CD8-positive, alpha-beta T cell (primary cell): ENCODE measurements at regions of chr13 and their contacts with region 1.

Region 1: DNA sequence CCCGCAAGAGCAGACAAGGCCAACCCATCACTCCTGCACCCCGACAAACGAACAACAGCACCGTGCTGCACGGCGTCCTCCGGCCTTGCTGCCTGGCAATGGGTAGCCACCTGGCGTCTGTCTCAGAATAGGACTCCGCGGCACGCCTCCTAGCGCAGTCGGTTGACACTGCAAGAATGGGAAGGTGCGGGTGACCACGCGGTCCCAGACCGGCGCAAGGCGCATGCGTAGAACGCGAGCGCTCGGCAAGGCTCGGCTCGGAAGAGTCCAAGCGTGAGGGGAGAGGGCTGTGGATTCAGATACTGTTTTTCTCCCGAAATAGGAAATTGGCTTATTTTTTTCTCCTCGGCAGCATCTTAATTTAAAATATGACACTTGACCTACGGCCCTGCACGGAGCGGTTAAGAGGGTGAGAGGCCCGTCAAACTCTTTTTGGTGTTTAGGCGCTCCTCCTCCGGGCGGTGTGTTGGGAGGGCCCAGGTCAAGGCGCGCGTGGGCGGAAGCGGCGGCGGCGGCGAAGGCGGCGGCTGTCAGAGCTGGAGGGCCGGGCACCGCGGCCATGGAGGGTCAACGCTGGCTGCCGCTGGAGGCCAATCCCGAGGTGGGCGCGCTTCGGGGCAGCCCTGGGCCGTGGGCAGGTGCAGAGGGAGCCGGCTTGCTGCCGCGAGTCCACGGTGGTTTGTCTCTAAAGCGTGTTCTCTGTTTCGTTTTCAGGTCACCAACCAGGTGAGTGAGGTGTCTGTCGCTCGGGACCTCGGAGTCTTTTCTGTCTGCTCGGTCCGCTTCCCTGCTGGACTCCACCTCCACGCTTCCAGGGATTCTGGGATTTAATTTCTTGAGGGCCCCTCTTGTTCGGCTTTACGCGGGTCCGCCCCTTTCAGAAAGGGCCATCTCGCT is at the start of gene UCHL3:
- DNase-seq: peak; percentile 95 to 99 (median 97)
- ATAC-seq: peak; percentile 92
- H3K4me3 ChIP-seq: peak within 1 kb of the TSS; percentile 74 to 82
- H3K4me3 Mint-ChIP-seq: peak within 1 kb of the TSS; percentile 95
- H3K27ac ChIP-seq: peak within 1 kb of the TSS; percentile 84 to 87
- H3K27ac Mint-ChIP-seq: peak within 1 kb of the TSS; percentile 97
- H3K4me1 ChIP-seq: peaks cover 19% of the 10 kb centered on the region
- H3K4me1 Mint-ChIP-seq: peaks cover 44% of the 10 kb centered on the region
- H3K27me3 ChIP-seq: no peaks in the 10 kb centered on the region
- H3K27me3 Mint-ChIP-seq: no peaks in the 10 kb centered on the region
- CTCF ChIP-seq: peak; percentile 91
- total RNA-seq, gene UCHL3: 17.7 to 17.9 TPM

Region 2: GRCh38 chr13:75236774-75237173 is 312.7 kb before region 1 on chr13:
- CTCF ChIA-PET with region 1: no interaction called
- POLR2A ChIA-PET with region 1: no interaction called
- intact Hi-C with region 1: no loop called
- DNase-seq: no peak
- ATAC-seq: no peak
- H3K4me3 ChIP-seq: no peak overlapping the region
- H3K4me3 Mint-ChIP-seq: no peak overlapping the region
- H3K27ac ChIP-seq: no peak overlapping the region
- H3K27ac Mint-ChIP-seq: no peak overlapping the region
- H3K4me1 ChIP-seq: no peaks in the 10 kb centered on the region
- H3K4me1 Mint-ChIP-seq: no peaks in the 10 kb centered on the region
- H3K27me3 ChIP-seq: no peaks in the 10 kb centered on the region
- H3K27me3 Mint-ChIP-seq: no peaks in the 10 kb centered on the region
- CTCF ChIP-seq: no peak

Region 3: GRCh38 chr13:75357576-75358289 is 191.8 kb before region 1 on chr13:
- CTCF ChIA-PET with region 1: no interaction called
- POLR2A ChIA-PET with region 1: interaction called, 3 read pairs
- intact Hi-C with region 1: loop called in 1 of 2 experiments (anchors 5 kb)
- DNase-seq: peak; percentile 6 to 76 (median 46)
- ATAC-seq: peak; percentile 100
- H3K4me3 ChIP-seq: no peak overlapping the region
- H3K4me3 Mint-ChIP-seq: no peak overlapping the region
- H3K27ac ChIP-seq: no peak overlapping the region
- H3K27ac Mint-ChIP-seq: no peak overlapping the region
- H3K4me1 ChIP-seq: no peaks in the 10 kb centered on the region
- H3K4me1 Mint-ChIP-seq: peaks cover 5% of the 10 kb centered on the region
- H3K27me3 ChIP-seq: no peaks in the 10 kb centered on the region
- H3K27me3 Mint-ChIP-seq: no peaks in the 10 kb centered on the region
- CTCF ChIP-seq: peak; percentile 90

Region 4: GRCh38 chr13:75383064-75383715 is 166.3 kb before region 1 on chr13:
- CTCF ChIA-PET with region 1: no interaction called
- POLR2A ChIA-PET with region 1: no interaction called
- intact Hi-C with region 1: no loop called
- DNase-seq: no peak
- ATAC-seq: no peak
- H3K4me3 ChIP-seq: no peak overlapping the region
- H3K4me3 Mint-ChIP-seq: no peak overlapping the region
- H3K27ac ChIP-seq: no peak overlapping the region
- H3K27ac Mint-ChIP-seq: no peak overlapping the region
- H3K4me1 ChIP-seq: no peaks in the 10 kb centered on the region
- H3K4me1 Mint-ChIP-seq: no peaks in the 10 kb centered on the region
- H3K27me3 ChIP-seq: no peaks in the 10 kb centered on the region
- H3K27me3 Mint-ChIP-seq: no peaks in the 10 kb centered on the region
- CTCF ChIP-seq: no peak

Region 5: GRCh38 chr13:75482070-75482819 is 67.3 kb before region 1 on chr13 and contains the start of gene TBC1D4:
- CTCF ChIA-PET with region 1: interaction called, 3 read pairs
- POLR2A ChIA-PET with region 1: no interaction called
- intact Hi-C with region 1: loop called (anchors 1 to 2 kb)
- DNase-seq: peak; percentile 16 to 70 (median 41)
- ATAC-seq: peak; percentile 72
- H3K4me3 ChIP-seq: peak within 1 kb of the TSS; percentile 56 to 66
- H3K4me3 Mint-ChIP-seq: peak within 1 kb of the TSS; percentile 94
- H3K27ac ChIP-seq: no peak within 1 kb of the TSS
- H3K27ac Mint-ChIP-seq: no peak within 1 kb of the TSS
- H3K4me1 ChIP-seq: peaks cover 5% of the 10 kb centered on the region
- H3K4me1 Mint-ChIP-seq: peaks cover 12% of the 10 kb centered on the region
- H3K27me3 ChIP-seq: peaks cover 11 to 12% of the 10 kb centered on the region in 2 experiments
- H3K27me3 Mint-ChIP-seq: peaks cover 66% of the 10 kb centered on the region
- CTCF ChIP-seq: peak; percentile 47
- total RNA-seq, gene TBC1D4: 20.2 to 23.1 TPM

Region 6: DNA sequence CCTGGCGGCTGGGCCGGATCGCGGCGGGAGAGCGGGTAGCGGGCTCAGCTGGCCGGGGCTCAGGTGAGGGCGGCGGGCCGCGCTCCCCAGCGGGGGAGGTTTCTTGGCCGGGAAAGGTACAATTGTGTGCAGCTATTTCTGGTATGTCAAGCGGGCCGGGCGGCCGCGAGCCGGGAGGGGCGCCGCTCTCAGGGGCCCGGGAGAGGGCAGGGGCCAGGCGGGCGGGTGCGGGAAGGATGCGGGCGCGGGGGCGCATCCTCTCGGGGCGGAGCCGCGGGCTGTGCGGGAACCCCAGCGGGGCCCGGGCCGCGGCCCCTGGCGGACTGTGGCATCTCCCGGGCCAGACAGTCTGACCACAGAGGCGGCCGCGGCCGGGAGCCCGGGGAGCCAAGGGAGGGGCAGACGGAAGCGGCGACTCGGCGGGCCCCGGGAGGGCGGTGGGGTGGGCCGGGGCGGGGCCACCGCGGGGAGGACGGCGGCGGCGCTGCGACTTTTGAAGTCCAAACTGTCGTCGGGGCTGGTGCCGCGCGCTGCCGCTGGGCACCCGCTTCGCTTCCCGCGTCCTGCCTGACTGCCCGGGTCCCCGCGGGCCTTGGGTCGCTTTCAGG is 86.4 kb after region 1 on chr13 and contains the start of gene LMO7:
- CTCF ChIA-PET with region 1: no interaction called
- POLR2A ChIA-PET with region 1: interaction called, 3 read pairs
- intact Hi-C with region 1: loop called (anchors 2 to 5 kb)
- DNase-seq: peak in 8 of 9 experiments; percentile 19 to 75 (median 52)
- ATAC-seq: peak; percentile 57
- H3K4me3 ChIP-seq: peak within 1 kb of the TSS; percentile 65 to 82
- H3K4me3 Mint-ChIP-seq: peak within 1 kb of the TSS; percentile 84
- H3K27ac ChIP-seq: no peak within 1 kb of the TSS
- H3K27ac Mint-ChIP-seq: peak within 1 kb of the TSS; percentile 79
- H3K4me1 ChIP-seq: peaks cover 3% of the 10 kb centered on the region
- H3K4me1 Mint-ChIP-seq: peaks cover 20% of the 10 kb centered on the region
- H3K27me3 ChIP-seq: no peaks in the 10 kb centered on the region
- H3K27me3 Mint-ChIP-seq: peaks cover 7% of the 10 kb centered on the region
- CTCF ChIP-seq: no peak
- total RNA-seq, gene LMO7: 26.4 to 27.2 TPM

Region 7: GRCh38 chr13:76991796-76992547 is 1442.5 kb after region 1 on chr13 and contains the start of gene CLN5:
- CTCF ChIA-PET with region 1: no interaction called
- POLR2A ChIA-PET with region 1: no interaction called
- intact Hi-C with region 1: loop called in 1 of 2 experiments (anchors 10 kb)
- DNase-seq: peak; percentile 91 to 98 (median 94)
- ATAC-seq: peak; percentile 83
- H3K4me3 ChIP-seq: peak within 1 kb of the TSS; percentile 72 to 86
- H3K4me3 Mint-ChIP-seq: peak within 1 kb of the TSS; percentile 95
- H3K27ac ChIP-seq: peak within 1 kb of the TSS; percentile 84 to 97
- H3K27ac Mint-ChIP-seq: peak within 1 kb of the TSS; percentile 99
- H3K4me1 ChIP-seq: peaks cover 31% of the 10 kb centered on the region
- H3K4me1 Mint-ChIP-seq: peaks cover 53% of the 10 kb centered on the region
- H3K27me3 ChIP-seq: peaks cover 0 to 13% of the 10 kb centered on the region in 2 experiments
- H3K27me3 Mint-ChIP-seq: peaks cover 12% of the 10 kb centered on the region
- CTCF ChIP-seq: no peak
- total RNA-seq, gene CLN5: 23.3 to 23.4 TPM